Activated T-helper 1 cell treated with anti-CD3 and anti-CD28 coated beads, Interleukin-12 subunit alpha, Interleukin-12 subunit beta, Interleukin-2, Interleukin-4 antibody, amounts not matched to agents 30 ng/mL and 10 ng/mL and 1 ng/mL, durations not matched to agents 14 hours and 24 hours and 36 hours (primary cell): ENCODE measurements at regions of chr14 and their contacts with region 1.

Region 1: DNA sequence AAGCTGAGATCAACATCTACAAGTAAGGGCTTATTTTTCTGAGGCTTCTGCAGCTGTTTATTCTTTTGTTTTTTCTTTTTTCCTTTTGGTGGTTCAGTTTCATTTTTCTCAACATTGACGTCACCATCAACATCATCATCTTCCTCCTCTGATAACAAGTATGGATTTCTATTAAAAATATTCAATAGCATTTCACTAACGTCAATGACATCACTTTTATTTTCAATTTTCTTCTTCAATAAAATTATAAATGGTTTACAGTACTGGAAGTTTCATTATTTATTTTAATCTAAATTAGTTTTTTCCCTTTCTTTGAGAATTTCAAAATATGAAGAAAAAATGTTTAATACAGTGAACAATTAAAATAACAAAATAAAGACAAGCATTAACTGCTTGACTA is 23.9 kb downstream of the NEMF start:
- DNase-seq: no peak
- H3K4me3 Mint-ChIP-seq: no peak overlapping the region
- H3K27ac Mint-ChIP-seq: no peak overlapping the region
- H3K4me1 Mint-ChIP-seq: peaks cover 7% of the 10 kb centered on the region
- H3K27me3 Mint-ChIP-seq: no peaks in the 10 kb centered on the region

Region 2: DNA sequence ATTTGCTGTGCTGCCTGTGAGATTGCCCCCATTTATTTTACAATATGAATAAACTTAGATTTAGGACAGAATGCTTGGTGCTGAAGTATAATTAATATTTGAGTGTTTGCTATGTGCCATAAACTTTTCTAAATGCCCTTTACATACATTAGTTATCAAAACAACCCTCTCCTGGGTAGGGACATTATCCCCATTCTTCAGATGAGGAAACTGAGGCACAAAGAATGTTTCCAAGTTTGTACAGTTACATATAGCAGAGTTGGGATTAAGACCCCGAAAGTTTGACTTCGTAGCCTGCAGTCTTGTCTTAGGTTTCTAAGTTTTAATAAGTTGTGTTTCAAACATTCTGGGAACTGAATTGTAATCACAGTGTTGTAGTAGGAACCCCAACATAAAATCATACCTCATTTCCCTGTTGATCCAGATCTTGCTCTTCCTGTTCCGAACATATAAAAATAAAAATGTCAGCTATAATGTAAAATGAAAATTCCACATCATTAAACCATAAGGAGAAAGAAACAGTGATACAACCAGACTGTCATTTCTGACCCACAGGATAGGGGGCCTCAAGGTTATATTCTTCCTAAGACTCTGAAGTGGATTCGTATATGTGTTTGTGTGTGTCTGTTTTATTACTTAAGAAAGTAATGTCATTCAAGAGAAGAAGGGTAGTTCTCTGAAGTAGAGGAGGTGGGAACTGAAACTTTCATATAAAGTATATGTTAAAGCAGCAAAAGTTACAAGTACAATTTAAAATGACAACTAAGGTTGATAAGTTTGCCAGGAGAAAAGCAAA is 42.1 kb before region 1 on chr14:
- intact Hi-C with region 1: loop called (anchors 5 kb)
- DNase-seq: no peak
- H3K4me3 Mint-ChIP-seq: no peak overlapping the region
- H3K27ac Mint-ChIP-seq: no peak overlapping the region
- H3K4me1 Mint-ChIP-seq: no peaks in the 10 kb centered on the region
- H3K27me3 Mint-ChIP-seq: no peaks in the 10 kb centered on the region